ENCODE measurements at regions of chr19 and their contacts with region 1.

Region 1: DNA sequence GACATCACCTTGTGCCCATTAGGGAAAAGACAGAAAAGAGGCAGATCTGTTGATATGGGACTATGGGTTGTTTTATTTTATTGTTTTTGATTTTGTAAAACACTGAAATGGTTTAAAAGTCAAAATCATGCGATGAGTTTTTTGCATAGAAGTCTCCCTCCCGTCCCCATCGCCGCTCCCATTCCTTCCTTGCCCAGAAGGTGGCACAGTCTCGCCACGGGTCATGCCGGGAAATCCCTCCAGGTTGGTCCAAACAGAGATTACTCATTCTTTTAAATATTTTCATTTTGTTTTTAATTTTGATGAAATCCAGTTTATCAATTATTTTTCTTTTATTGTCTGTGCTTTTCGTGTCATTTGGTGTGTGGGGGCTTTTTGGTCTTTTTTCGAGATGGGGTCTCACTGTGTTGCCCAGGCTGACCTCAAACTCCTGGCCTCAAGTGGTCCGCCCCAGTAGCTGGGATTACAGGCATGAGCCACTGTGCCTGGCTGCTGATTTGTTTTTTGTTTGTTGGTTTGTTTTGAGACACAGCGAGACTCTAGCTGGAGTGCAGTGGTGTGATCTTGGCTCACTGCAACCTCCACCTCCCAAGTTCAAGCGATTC is 9.2 kb downstream of the PGPEP1 start:
- DNase-seq: peak; percentile 56 to 81 (median 77)
- H3K4me3 ChIP-seq: no peak overlapping the region
- H3K27ac ChIP-seq: peak overlapping the region in 1 of 5 donors; percentile 12
- H3K4me1 ChIP-seq: peaks cover 0 to 6% of the 10 kb centered on the region in 2 donors
- H3K27me3 ChIP-seq: no peaks in the 10 kb centered on the region
- CTCF ChIP-seq: peak; percentile 63 to 94 (median 81)
- POLR2A ChIP-seq: no peak

Region 2: GRCh38 chr19:18388100-18388959 is 38.7 kb after region 1 on chr19:
- intact Hi-C with region 1: loop called in 1 of 2 experiments (anchors 5 kb)
- DNase-seq: peak; percentile 87 to 92 (median 89)
- H3K4me3 ChIP-seq: peak overlapping the region in 1 of 4 donors; percentile 30
- H3K27ac ChIP-seq: peak overlapping the region in 2 of 5 donors; percentile 54
- H3K4me1 ChIP-seq: peaks cover 0 to 7% of the 10 kb centered on the region in 2 donors
- H3K27me3 ChIP-seq: no peaks in the 10 kb centered on the region
- CTCF ChIP-seq: peak; percentile 88 to 100 (median 98)
- POLR2A ChIP-seq: peak; percentile 40 to 57

Region 3: GRCh38 chr19:18414504-18415177 is 65.0 kb after region 1 on chr19:
- intact Hi-C with region 1: loop called (anchors 5 kb)
- DNase-seq: peak in 5 of 7 donors; percentile 39 to 63 (median 45)
- H3K4me3 ChIP-seq: peak overlapping the region in 1 of 4 donors; percentile 24
- H3K27ac ChIP-seq: peak overlapping the region in 4 of 5 donors; percentile 47 to 92 (median 86)
- H3K4me1 ChIP-seq: peaks cover 33 to 45% of the 10 kb centered on the region in 2 donors
- H3K27me3 ChIP-seq: no peaks in the 10 kb centered on the region
- CTCF ChIP-seq: no peak
- POLR2A ChIP-seq: no peak

Region 4: GRCh38 chr19:18571564-18572300 is 222.1 kb after region 1 on chr19 and contains the start of gene UBA52:
- intact Hi-C with region 1: no loop called
- DNase-seq: peak; percentile 98 to 99 (median 98)
- H3K4me3 ChIP-seq: peak within 1 kb of the TSS; percentile 79 to 94 (median 82)
- H3K27ac ChIP-seq: peak within 1 kb of the TSS; percentile 85 to 94 (median 92)
- H3K4me1 ChIP-seq: peaks cover 14 to 19% of the 10 kb centered on the region in 2 donors
- H3K27me3 ChIP-seq: no peaks in the 10 kb centered on the region
- CTCF ChIP-seq: peak in 1 of 6 experiments; percentile 7
- POLR2A ChIP-seq: peak; percentile 83 to 94
- total RNA-seq, gene UBA52: 781 to 1,331 (median 1,025) TPM

Measured in adrenal gland (tissue), 19 donors.